ENCODE measurements at regions of chr5 and their contacts with region 1.

Region 1: DNA sequence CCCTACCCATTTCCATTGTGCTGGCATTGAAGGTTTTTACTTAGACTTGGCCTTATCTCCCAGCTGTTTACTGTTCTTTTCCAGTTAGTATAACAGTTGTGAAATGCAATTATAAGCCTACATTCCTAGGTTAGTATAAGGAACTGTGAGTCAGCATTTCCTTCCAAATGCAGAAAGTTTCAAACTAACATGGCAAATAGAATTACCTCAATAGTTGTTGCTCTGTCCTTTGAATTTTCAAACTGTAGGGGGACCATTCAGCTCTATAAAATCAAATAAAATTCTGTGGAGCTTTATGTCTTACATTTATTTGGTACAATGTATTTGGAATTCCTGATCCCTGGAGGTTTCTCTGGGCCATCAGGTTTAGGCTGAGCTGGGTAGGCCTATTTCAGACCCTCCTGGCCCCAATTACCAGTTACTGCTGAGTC is 47.2 kb downstream of the ARHGEF28 start:
- DNase-seq: no peak
- H3K4me3 ChIP-seq: no peak overlapping the region
- H3K27ac ChIP-seq: 0 out of 2 replicates have a peak overlapping the region, but pooled peaks have one; percentile 10
- H3K4me1 ChIP-seq: no peaks in the 10 kb centered on the region; a peak in 1 of 7 replicates
- H3K27me3 ChIP-seq: no peaks in the 10 kb centered on the region
- CTCF ChIP-seq: no peak
- EP300 ChIP-seq: no peak
- POLR2A ChIP-seq: no peak
- RAD21 ChIP-seq: no peak

Region 2: DNA sequence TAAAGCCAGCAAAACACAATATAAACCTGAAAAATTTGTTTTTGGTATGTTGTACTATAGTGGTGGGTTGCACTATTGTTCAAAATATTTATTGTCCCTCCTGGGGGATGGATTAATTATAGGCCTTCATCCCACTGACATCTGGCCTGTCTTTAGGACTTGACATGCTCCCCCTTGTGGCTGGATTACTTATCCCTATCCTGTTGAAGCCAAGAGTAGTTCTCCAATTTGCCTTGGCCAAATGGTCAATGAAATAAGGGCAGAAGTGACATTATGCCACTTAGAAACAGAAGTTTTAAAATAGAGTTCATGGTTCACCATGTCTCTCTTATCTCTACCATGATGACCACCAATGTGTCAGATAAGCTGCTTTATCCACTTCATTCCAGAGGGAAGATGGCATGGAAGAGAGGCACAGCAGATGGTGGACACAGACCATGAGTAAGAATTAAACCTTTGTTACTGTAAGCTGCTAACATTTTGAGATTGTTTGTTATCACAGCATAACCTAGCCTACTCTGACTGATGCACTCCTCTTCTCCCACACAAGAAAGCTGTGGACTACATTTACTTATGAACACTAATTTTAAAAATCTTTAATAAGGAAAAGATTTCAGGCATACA is 76.4 kb before region 1 on chr5:
- CTCF ChIA-PET with region 1: interaction called, 10 read pairs
- POLR2A ChIA-PET with region 1: no interaction called
- DNase-seq: peak in 1 of 2 experiments; percentile 57
- H3K4me3 ChIP-seq: no peak overlapping the region
- H3K27ac ChIP-seq: no peak overlapping the region
- H3K4me1 ChIP-seq: no peaks in the 10 kb centered on the region
- H3K27me3 ChIP-seq: no peaks in the 10 kb centered on the region
- CTCF ChIP-seq: peak; percentile 8 to 81 (median 57)
- EP300 ChIP-seq: no peak
- POLR2A ChIP-seq: no peak
- RAD21 ChIP-seq: peak; percentile 45 to 62

Region 3: GRCh38 chr5:73693481-73694061 is 20.4 kb after region 1 on chr5:
- CTCF ChIA-PET with region 1: interaction called, 10 read pairs
- POLR2A ChIA-PET with region 1: no interaction called
- DNase-seq: peak in 1 of 2 experiments; percentile 7
- H3K4me3 ChIP-seq: no peak overlapping the region
- H3K27ac ChIP-seq: no peak overlapping the region
- H3K4me1 ChIP-seq: peaks cover 2 to 8% (median 5%) of the 10 kb centered on the region in 4 experiments; a peak in 4 of 7 replicates
- H3K27me3 ChIP-seq: no peaks in the 10 kb centered on the region; a peak in 1 of 7 replicates
- CTCF ChIP-seq: peak in 1 of 3 experiments; percentile 25; a peak in 1 of 4 replicates
- EP300 ChIP-seq: no peak
- POLR2A ChIP-seq: no peak
- RAD21 ChIP-seq: no peak; a peak in 1 of 4 replicates